PC-3 (cell line): ENCODE measurements at regions of chr2 and their contacts with region 1.

Region 1: DNA sequence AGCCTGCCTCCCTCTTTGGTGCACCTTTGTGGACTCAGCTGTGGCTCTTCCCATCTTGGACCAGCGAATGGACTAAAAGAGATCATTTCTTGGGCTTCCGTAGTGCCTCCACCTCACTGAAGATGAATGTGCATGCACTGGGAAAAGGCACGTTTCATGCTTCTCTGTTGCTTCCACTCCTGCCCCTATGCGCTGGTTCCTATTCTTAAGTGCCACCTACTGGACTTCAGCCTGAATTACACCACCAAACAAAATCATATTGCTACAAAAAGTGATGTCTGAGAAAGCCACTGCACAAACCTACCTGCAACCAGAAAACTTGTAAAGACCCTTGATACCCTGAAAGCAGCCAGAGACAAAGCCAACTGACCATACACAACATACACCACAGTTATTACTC is 695.6 kb downstream of the TSN start:
- DNase-seq: peak; percentile 66
- ATAC-seq: peak; percentile 56; the same call in 1 of the 2 replicates
- H3K4me3 ChIP-seq: no peak overlapping the region
- H3K27ac ChIP-seq: no peak overlapping the region
- H3K4me1 ChIP-seq: no peaks in the 10 kb centered on the region
- H3K27me3 ChIP-seq: no peaks in the 10 kb centered on the region
- CTCF ChIP-seq: peak; percentile 74

Region 2: GRCh38 chr2:121810959-121811853 is 639.8 kb before region 1 on chr2:
- CTCF ChIA-PET with region 1: no interaction called
- POLR2A ChIA-PET with region 1: no interaction called
- intact Hi-C with region 1: loop called (anchors 5 kb)
- DNase-seq: peak; percentile 79
- ATAC-seq: peak; percentile 97
- H3K4me3 ChIP-seq: no peak overlapping the region
- H3K27ac ChIP-seq: no peak overlapping the region
- H3K4me1 ChIP-seq: no peaks in the 10 kb centered on the region
- H3K27me3 ChIP-seq: 0 out of 2 replicates have a peak, but pooled peaks cover 4% of the 10 kb centered on the region
- CTCF ChIP-seq: peak; percentile 78

Region 3: DNA sequence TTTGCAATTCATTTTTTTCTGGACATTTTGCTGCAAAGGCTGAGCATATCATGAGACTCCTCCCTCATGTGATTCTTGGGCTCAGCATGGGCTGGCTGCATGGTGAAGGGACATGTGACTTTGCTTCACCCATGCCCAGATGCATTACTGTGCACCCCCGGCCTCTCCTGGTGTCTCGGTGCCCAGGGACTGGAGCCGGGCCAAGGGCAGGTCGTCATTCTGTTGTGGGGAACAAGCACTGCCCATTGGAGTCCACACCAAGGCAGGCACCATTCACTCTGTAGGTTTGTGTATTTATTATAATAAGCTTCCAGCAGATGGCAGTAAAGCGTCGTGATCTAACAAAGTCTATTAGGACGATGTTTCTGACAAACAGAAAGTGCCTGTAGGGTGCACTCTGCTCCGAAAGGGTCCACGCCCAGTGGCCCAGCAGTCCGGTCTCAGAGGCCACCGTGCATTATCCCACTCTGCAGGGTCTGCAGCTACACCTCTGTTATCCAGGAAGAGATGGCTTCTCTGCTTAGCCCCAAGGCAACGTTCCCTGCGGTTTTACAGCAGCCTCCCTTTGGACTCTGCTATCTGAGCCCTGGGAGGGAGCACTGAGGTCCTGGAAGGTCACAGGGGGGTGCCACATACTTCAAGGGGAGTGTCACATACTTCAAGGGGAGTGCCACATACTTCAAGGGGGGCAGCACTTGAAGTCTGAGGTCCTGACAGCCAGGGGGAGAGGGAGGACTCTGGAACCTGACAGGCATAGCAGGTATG is 476.0 kb before region 1 on chr2:
- CTCF ChIA-PET with region 1: interaction called, 4 read pairs
- POLR2A ChIA-PET with region 1: no interaction called
- intact Hi-C with region 1: loop called (anchors 1 kb)
- DNase-seq: peak; percentile 91
- ATAC-seq: peak; percentile 98
- H3K4me3 ChIP-seq: peak overlapping the region; percentile 48; the same call in 1 of the 2 replicates
- H3K27ac ChIP-seq: no peak overlapping the region
- H3K4me1 ChIP-seq: no peaks in the 10 kb centered on the region; the same call in 1 of the 2 replicates
- H3K27me3 ChIP-seq: peaks cover 17% of the 10 kb centered on the region; the same call in 1 of the 2 replicates
- CTCF ChIP-seq: peak; percentile 79

Region 4: DNA sequence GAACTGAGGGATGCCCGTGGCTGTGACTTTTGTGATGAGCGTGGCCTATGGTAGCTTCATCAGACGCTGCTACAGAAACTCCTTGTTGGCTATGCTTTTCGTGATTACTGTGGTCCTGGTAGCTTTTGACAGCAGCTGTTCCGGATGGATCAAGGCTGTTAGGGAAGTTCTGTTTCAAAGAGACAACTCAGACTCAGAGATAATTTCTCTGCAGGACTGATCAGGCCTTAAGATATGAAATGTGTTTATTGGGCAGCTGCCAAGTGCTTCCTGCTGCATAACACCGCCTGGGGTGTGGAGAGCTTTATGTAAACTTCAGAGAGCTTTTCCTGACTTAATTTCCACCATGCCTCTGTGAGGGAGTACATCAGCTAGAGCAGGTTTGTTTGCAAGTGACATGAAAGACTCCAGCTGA is 451.8 kb before region 1 on chr2:
- CTCF ChIA-PET with region 1: interaction called, 16 read pairs
- POLR2A ChIA-PET with region 1: no interaction called
- intact Hi-C with region 1: no loop called
- DNase-seq: peak; percentile 9
- ATAC-seq: no peak
- H3K4me3 ChIP-seq: no peak overlapping the region
- H3K27ac ChIP-seq: no peak overlapping the region
- H3K4me1 ChIP-seq: no peaks in the 10 kb centered on the region
- H3K27me3 ChIP-seq: peaks cover 51% of the 10 kb centered on the region
- CTCF ChIP-seq: no peak

Region 5: GRCh38 chr2:122191341-122191740 is 259.7 kb before region 1 on chr2:
- CTCF ChIA-PET with region 1: no interaction called
- POLR2A ChIA-PET with region 1: no interaction called
- intact Hi-C with region 1: loop called (anchors 2 kb)
- DNase-seq: peak; percentile 77
- ATAC-seq: peak; percentile 97
- H3K4me3 ChIP-seq: no peak overlapping the region
- H3K27ac ChIP-seq: no peak overlapping the region
- H3K4me1 ChIP-seq: peaks cover 10% of the 10 kb centered on the region; the same call in 1 of the 2 replicates
- H3K27me3 ChIP-seq: no peaks in the 10 kb centered on the region
- CTCF ChIP-seq: peak; percentile 85

Region 6: DNA sequence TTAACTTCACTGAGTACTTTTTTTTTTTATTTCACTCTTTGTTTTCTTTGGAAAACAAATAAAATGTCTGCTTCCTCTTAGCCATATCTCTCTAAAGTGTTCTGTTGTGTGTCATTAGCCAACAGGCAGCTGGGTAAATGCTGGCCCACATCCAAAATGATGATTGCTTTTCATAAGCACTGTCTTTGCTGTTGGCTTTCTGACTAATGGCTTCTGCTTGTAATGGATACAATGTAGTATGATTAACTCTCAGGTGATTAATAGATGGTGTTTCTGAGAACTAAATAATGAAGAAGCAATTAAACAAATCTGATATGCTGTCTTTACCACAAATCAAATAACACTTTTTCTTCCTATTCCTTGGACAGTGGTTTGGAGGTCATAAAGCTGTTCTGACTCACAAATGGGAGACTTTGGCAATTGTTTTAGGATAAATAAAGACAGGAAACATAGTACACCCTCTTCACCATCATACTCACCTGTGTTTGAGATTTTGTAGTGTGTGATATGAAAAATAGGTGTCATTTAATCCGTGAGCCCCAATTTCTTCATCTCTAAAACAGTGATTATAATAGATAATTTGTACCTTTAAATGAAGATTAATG is 192.8 kb after region 1 on chr2:
- CTCF ChIA-PET with region 1: no interaction called
- POLR2A ChIA-PET with region 1: no interaction called
- intact Hi-C with region 1: loop called (anchors 5 kb)
- DNase-seq: peak; percentile 97
- ATAC-seq: peak; percentile 95
- H3K4me3 ChIP-seq: no peak overlapping the region
- H3K27ac ChIP-seq: peak overlapping the region; percentile 64
- H3K4me1 ChIP-seq: peaks cover 23% of the 10 kb centered on the region
- H3K27me3 ChIP-seq: no peaks in the 10 kb centered on the region
- CTCF ChIP-seq: no peak